Body of pancreas (tissue), 4 donors: ENCODE measurements at regions of chr14 and their contacts with region 1.

Region 1: DNA sequence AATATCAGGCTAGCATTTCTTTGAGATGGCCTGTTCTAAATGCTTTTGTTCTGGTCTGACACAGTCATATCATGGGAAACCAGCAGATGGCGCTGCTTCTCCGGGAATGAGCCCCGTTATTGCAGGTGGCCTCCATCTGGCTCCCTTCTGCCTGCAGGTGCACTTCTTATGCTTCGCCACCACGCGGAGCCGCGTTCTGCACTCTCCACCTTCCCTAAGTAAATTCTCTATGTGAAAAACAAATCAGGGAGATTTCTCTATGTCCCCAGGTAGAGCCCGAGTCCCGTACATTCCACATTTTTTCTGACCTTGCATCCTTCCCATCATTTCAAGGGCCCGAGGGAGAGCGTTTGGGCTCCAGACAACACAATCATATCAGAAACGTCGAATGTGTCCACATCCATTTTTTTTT is 26.2 kb downstream of the GLRX5 start:
- DNase-seq: peak; percentile 92 to 96 (median 94)
- ATAC-seq: peak; percentile 95
- H3K4me3 ChIP-seq: no peak overlapping the region
- H3K27ac ChIP-seq: no peak overlapping the region
- H3K4me1 ChIP-seq: peaks cover 12% of the 10 kb centered on the region
- H3K27me3 ChIP-seq: no peaks in the 10 kb centered on the region
- CTCF ChIP-seq: peak; percentile 96 to 100 (median 100)
- POLR2A ChIP-seq: no peak

Region 2: DNA sequence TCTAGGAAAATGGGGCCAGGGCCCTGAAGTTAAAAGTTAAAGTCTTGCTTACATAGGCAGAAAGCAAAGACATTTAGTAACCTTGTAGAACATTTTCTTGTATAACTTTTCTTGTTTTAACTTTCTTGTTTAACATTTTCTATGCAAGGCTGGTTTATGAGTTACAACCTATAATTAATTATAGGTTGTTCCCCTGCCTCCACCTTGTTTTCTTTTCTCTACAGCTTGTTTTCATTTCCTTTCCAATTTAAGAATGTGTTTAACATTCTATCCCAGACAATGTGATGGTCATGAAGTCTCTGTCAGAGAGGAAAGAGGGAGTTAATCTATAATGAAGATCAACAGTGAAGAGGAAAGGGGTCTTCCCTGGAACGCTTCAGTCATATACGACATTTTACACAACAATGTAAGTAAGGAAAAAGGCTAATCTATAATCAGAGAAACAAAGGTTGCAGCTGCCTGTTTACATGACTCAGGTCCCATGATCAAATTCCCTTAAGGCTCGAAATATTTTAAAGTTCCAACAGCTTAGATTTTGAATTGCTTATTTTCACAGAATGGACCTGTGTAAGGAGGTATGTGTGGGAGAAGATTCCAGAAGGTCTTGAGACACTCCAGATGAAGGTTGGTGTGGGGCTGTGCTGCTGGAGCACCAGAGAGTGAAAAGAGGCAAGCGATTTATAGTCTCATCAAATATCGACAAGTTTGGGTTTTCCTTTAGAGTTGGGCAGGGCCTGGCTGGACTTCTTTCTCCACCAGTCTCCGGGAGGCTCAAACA is 91.0 kb after region 1 on chr14:
- intact Hi-C with region 1: no loop called
- DNase-seq: no peak
- ATAC-seq: no peak
- H3K4me3 ChIP-seq: no peak overlapping the region
- H3K27ac ChIP-seq: peak overlapping the region in 2 of 4 donors; percentile 33 to 37
- H3K4me1 ChIP-seq: peaks cover 10% of the 10 kb centered on the region
- H3K27me3 ChIP-seq: no peaks in the 10 kb centered on the region
- CTCF ChIP-seq: no peak
- POLR2A ChIP-seq: no peak

Region 3: GRCh38 chr14:95993768-95994592 is 433.0 kb after region 1 on chr14:
- intact Hi-C with region 1: loop called (anchors 5 kb)
- DNase-seq: peak; percentile 26 to 47 (median 34)
- ATAC-seq: no peak
- H3K4me3 ChIP-seq: no peak overlapping the region
- H3K27ac ChIP-seq: no peak overlapping the region
- H3K4me1 ChIP-seq: no peaks in the 10 kb centered on the region
- H3K27me3 ChIP-seq: no peaks in the 10 kb centered on the region
- CTCF ChIP-seq: peak; percentile 56 to 85 (median 79)
- POLR2A ChIP-seq: no peak